Ascending aorta (tissue), 2 donors: ENCODE measurements at regions of chr1 and their contacts with region 1.

Region 1: GRCh38 chr1:12658531-12659453 is 14.9 kb downstream of the AADACL4 start:
- DNase-seq: peak in 1 of 2 donors; percentile 85
- H3K4me3 ChIP-seq: no peak overlapping the region
- H3K27ac ChIP-seq: no peak overlapping the region
- H3K4me1 ChIP-seq: no peaks in the 10 kb centered on the region
- H3K27me3 ChIP-seq: no peaks in the 10 kb centered on the region
- CTCF ChIP-seq: peak; percentile 88 to 95 (median 95)

Region 2: DNA sequence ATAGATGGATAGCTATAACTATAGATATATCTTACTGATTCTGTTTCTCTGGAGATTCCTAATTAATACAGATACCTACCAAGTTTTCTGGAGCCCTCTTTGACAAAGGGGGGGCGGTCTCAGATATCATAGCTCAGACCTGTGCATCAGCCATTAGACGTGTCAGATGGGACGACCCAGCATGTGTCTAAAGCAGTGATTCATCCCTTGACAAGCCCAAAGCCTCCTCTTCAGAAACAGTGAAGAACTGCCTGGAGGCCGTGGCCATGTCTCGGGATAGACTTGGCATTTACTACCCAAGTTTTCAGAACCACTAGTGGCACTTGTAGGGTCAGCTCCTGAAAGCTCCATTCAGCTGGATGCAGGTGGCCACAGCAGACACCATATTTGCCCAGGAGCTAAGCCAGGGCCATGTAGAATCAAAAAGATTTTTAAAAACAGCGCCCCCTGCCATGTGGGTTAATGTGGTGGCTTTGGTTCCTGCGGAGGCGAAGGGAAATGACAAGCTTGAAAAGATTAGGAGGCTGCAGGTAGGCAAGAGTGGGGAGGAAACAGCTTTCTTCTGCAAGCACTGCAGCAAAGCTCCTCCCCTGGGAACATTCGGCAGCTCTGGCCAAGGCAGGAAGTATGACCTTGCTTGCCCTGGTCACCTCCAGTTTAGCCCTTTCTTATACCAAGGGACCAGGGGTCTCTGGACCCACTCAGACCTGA is 1086.7 kb before region 1 on chr1:
- intact Hi-C with region 1: no loop called
- DNase-seq: no peak
- H3K4me3 ChIP-seq: no peak overlapping the region
- H3K27ac ChIP-seq: no peak overlapping the region
- H3K4me1 ChIP-seq: no peaks in the 10 kb centered on the region
- H3K27me3 ChIP-seq: no peaks in the 10 kb centered on the region
- CTCF ChIP-seq: no peak

Region 3: DNA sequence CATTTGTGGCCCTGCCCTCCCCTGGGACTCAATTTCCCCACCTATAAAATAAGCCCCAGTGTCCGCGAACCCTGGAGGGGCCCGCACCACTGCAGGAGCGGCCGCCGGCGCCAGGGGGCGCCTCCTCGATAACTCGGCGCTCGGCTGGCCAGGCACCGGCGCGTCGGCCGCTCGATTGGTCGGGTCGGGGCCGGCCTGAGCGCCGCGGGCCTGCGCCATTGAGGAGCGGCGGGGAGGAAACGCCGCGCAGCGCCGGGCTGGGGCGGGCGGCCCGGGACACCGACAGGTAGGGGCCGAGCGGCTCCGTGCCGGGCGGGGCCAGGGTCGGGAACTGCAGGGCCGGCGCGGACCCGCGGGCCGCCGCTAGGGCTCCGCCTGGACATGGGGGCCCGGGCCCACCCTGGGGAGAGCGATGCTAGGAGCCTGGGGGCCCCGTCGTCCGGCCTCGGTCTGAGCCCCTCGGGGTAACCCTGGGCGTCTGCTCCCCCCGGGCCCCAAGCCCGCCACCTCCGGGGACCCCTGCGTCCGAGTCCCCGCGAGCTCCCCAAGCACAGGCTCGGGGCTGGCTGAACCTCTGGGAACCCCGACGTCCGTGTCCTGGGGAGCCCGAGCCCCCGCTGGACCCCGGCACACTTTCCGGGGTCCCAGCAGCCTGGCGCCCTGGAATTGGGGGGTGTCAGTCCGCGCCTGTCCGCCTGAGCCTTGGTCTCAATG is 428.8 kb before region 1 on chr1 and contains the start of gene VPS13D:
- intact Hi-C with region 1: loop called (anchors 5 kb)
- DNase-seq: peak in 1 of 2 donors; percentile 90
- H3K4me3 ChIP-seq: peak within 1 kb of the TSS; percentile 95 to 99
- H3K27ac ChIP-seq: peak within 1 kb of the TSS; percentile 80 to 89
- H3K4me1 ChIP-seq: peaks cover 4 to 10% of the 10 kb centered on the region in 2 donors
- H3K27me3 ChIP-seq: no peaks in the 10 kb centered on the region
- CTCF ChIP-seq: peak; percentile 78 to 98 (median 91)
- total RNA-seq, gene VPS13D: 28.3 TPM

Region 4: GRCh38 chr1:12275369-12275768 is 383.4 kb before region 1 on chr1:
- intact Hi-C with region 1: loop called (anchors 2 kb)
- DNase-seq: no peak
- H3K4me3 ChIP-seq: no peak overlapping the region
- H3K27ac ChIP-seq: no peak overlapping the region
- H3K4me1 ChIP-seq: no peaks in the 10 kb centered on the region
- H3K27me3 ChIP-seq: no peaks in the 10 kb centered on the region
- CTCF ChIP-seq: peak in 2 of 3 experiments; percentile 67 to 72

Region 5: GRCh38 chr1:12369258-12369657 is 289.5 kb before region 1 on chr1:
- intact Hi-C with region 1: no loop called
- DNase-seq: no peak
- H3K4me3 ChIP-seq: no peak overlapping the region
- H3K27ac ChIP-seq: no peak overlapping the region
- H3K4me1 ChIP-seq: no peaks in the 10 kb centered on the region
- H3K27me3 ChIP-seq: no peaks in the 10 kb centered on the region
- CTCF ChIP-seq: no peak

Region 6: GRCh38 chr1:12593621-12594066 is 65.1 kb before region 1 on chr1:
- intact Hi-C with region 1: no loop called
- DNase-seq: peak; percentile 26 to 85
- H3K4me3 ChIP-seq: peak overlapping the region in 1 of 2 donors; percentile 63
- H3K27ac ChIP-seq: peak overlapping the region; percentile 96
- H3K4me1 ChIP-seq: peaks cover 37 to 69% of the 10 kb centered on the region in 2 donors
- H3K27me3 ChIP-seq: no peaks in the 10 kb centered on the region
- CTCF ChIP-seq: no peak